ENCODE measurements at regions of chr2 and their contacts with region 1.

Region 1: DNA sequence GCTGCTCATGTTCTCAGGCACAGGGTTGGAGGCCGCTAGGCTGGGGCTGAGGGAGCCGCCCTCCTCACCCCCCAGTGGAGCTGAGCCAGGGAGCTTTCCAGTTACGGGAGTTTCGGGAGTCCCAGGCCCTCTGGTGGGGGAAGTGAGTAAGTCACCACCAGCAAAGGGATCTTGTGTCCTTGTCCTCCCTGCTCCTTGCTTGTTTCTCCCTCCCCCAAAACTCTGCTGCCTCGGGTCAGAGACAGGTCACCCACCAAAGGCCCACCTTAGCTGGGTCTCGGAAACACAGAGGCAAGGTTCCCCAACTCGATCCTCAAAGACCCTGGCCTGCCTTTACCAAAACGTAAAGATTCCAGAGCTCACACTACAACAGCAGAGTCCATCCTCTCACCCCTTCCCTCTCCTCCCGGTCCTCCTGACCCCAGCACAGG is 60.5 kb upstream of the POMC start:
- DNase-seq: peak; percentile 76
- H3K4me3 Mint-ChIP-seq: no peak overlapping the region
- H3K27ac Mint-ChIP-seq: no peak overlapping the region
- H3K4me1 Mint-ChIP-seq: no peaks in the 10 kb centered on the region
- H3K27me3 Mint-ChIP-seq: no peaks in the 10 kb centered on the region
- CTCF ChIP-seq: peak; percentile 79

Region 2: DNA sequence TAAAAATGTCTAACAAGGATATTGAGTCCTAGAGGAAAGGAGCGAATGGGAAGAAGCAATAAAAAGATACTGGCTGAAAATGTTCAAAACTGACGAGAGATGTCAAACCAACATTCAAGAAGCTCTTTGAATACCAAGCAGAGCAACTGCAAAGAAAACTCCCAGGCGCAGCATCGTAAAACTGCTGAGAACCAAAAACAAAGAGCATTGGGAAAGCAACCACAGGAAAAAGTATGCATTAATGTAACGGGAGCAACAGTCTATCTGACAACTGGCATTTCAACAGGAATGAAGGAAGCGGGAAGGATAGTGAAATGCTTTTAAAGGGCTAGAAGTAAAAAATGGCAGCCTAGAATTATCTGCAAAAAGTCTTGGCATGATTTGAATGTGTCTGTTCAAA is 361.9 kb before region 1 on chr2:
- CTCF ChIA-PET with region 1: interaction called, 10 read pairs
- intact Hi-C with region 1: no loop called
- DNase-seq: no peak
- H3K4me3 Mint-ChIP-seq: no peak overlapping the region
- H3K27ac Mint-ChIP-seq: no peak overlapping the region
- H3K4me1 Mint-ChIP-seq: no peaks in the 10 kb centered on the region
- H3K27me3 Mint-ChIP-seq: no peaks in the 10 kb centered on the region
- CTCF ChIP-seq: no peak